HEK293 (cell line): ENCODE measurements at regions of chr11 and their contacts with region 1.

Region 1: DNA sequence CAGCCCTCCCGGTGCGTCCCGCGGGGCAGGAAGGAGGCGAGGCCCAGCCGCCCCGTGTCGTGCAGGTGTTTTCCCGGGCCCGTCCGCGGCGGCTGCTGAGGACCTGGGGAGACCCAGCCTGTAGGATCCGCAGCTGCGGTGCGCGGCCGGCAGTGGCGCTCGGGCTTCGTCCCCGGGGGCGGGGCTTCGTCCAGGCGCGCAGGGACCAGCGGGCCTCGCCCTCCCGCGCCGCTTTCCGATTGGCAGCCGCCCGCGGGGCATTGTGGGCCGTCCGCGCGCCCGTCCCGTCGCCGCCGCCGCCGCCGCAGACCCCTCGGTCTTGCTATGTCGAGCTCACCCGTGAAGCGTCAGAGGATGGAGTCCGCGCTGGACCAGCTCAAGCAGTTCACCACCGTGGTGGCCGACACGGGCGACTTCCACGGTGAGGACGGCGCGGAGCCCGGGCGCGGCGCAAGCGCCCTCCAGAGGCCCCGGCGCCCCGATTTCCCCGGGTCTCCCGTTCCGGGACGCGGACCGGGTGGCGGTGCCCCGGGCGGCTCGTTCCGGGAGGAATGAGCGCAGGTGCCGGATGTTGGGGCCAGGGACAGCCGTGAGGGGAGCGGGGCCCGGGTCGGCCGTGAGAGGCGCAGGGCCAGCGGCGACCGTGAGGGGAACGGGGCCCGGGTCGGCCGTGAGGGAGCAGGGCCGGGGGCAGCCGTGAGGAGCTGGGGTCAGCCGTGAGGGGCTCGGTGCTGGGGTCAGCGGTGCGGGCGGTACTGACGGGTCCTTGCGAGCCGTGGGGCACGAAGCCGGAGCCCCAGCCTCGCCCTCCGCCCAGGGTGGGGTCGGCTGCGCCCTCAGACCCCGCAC is at the start of gene TALDO1:
- H3K4me3 ChIP-seq: peak within 1 kb of the TSS; percentile 97
- H3K27ac ChIP-seq: peak within 1 kb of the TSS; percentile 74; the same call in 1 of the 2 replicates
- H3K4me1 ChIP-seq: no peaks in the 10 kb centered on the region
- CTCF ChIP-seq: no peak

Region 2: GRCh38 chr11:762421-763072 is 15.2 kb after region 1 on chr11:
- CTCF ChIA-PET with region 1: interaction called, 3 read pairs
- POLR2A ChIA-PET with region 1: interaction called, 10 read pairs
- H3K4me3 ChIP-seq: no peak overlapping the region
- H3K27ac ChIP-seq: no peak overlapping the region
- H3K4me1 ChIP-seq: no peaks in the 10 kb centered on the region
- CTCF ChIP-seq: peak; percentile 85

Region 3: GRCh38 chr11:777288-778255 is 30.2 kb after region 1 on chr11 and contains the start of gene GATD1:
- CTCF ChIA-PET with region 1: interaction called, 3 read pairs
- POLR2A ChIA-PET with region 1: interaction called, 12 read pairs
- H3K4me3 ChIP-seq: peak within 1 kb of the TSS; percentile 88
- H3K27ac ChIP-seq: peak within 1 kb of the TSS; percentile 80; the same call in 1 of the 2 replicates
- H3K4me1 ChIP-seq: no peaks in the 10 kb centered on the region; the same call in 1 of the 2 replicates
- CTCF ChIP-seq: no peak